ENCODE measurements at regions of chr22 and their contacts with region 1.

Region 1: GRCh38 chr22:50562523-50563412 is at the start of gene SYCE3:
- DNase-seq: peak; percentile 30
- H3K4me3 ChIP-seq: peak within 1 kb of the TSS; percentile 52
- H3K27me3 ChIP-seq: peaks cover 7% of the 10 kb centered on the region; the same call in 1 of the 2 replicates
- CTCF ChIP-seq: peak; percentile 84
- polyA plus RNA-seq, gene SYCE3: not detected in 2 replicates

Region 2: DNA sequence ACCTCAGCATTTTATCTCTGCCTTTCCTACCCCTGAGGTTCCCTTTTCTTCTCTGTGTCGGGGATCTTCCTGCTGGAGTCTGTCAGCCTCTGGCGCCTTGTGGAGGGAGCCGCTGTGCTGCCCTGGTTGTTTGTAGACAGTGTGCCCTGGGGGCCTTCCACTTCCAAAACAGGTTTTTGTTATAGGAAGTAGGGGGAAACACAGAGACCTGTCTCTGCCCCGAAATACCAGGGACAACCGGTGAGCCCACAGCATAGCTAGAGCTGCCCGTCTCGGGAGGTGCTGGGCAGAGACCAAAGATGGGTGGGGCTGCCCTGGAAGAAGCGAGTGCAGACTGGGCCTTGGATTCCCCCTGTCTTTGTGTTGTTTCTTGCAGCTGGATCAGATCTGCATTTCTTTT is 46.7 kb before region 1 on chr22:
- CTCF ChIA-PET with region 1: no interaction called
- POLR2A ChIA-PET with region 1: no interaction called
- DNase-seq: no peak
- H3K4me3 ChIP-seq: no peak overlapping the region
- H3K27me3 ChIP-seq: no peaks in the 10 kb centered on the region
- CTCF ChIP-seq: no peak

Region 3: DNA sequence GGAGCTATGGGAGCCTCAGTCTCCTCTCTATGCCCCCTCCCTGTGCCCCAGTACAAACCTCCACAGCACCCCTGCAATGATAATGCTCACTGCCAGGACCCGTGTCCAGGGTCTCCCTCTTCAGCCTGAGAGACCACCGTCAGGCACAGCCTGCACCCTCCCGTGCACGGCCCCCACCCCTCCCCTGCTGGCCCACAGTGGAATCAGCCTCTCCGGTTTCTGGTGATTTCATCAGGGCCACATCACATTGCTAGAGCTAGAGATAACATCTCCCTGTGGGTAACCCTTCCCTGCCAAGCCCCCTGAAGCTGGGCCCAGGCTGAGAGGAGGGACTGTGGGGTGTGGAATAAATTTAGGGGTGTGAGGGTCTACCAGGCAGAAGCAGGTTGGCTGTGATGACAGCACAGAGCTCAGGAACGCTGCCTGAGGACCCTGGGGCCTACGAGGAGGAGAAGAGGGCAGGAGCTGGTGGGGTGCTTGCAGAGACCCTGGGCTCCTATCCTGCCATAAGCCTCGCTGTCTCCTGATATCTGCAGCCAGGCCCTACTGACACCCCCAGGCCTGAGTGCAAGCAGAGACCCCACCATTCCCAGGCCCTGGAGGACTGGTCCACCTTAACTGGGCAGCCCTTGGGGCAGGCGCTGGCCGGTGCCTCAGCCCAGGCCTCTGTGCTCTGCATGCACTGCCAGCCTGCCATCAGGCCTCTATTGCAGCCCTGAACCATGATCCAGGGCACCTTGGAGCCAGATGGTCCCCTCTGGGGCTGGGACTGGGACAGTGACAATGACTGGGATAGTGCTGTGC is 17.0 kb before region 1 on chr22 and contains the start of gene KLHDC7B:
- CTCF ChIA-PET with region 1: interaction called, 17 read pairs
- POLR2A ChIA-PET with region 1: no interaction called
- DNase-seq: no peak
- H3K4me3 ChIP-seq: no peak within 1 kb of the TSS
- H3K27me3 ChIP-seq: peaks cover 30% of the 10 kb centered on the region
- CTCF ChIP-seq: peak; percentile 52
- polyA plus RNA-seq, gene KLHDC7B: 0.34 and 0.39 TPM in 2 replicates

Region 4: DNA sequence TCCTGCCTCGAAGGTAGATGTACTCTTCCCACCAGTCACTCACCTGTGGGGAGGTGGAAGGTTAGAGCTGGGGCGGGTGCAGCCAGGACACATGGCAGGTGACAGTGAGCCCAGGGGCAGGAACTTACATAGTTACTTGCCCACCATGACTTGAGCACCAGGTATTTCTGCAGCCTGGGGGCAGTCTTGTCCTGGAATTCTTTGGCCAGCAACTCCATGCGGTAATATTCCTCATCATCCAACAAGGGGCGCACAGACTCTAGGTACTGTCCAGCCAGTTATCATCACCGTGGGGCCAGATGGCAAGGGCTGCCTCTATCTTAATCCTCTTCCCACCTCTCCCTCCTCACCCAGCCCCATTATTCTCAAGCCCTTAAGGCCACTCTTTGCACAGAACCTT is 13.3 kb after region 1 on chr22:
- CTCF ChIA-PET with region 1: interaction called, 20 read pairs
- POLR2A ChIA-PET with region 1: no interaction called
- DNase-seq: no peak
- H3K4me3 ChIP-seq: no peak overlapping the region
- H3K27me3 ChIP-seq: no peaks in the 10 kb centered on the region
- CTCF ChIP-seq: peak; percentile 23; the same call in 1 of the 2 replicates